ENCODE measurements at regions of chr1 and their contacts with region 1.

Region 1: DNA sequence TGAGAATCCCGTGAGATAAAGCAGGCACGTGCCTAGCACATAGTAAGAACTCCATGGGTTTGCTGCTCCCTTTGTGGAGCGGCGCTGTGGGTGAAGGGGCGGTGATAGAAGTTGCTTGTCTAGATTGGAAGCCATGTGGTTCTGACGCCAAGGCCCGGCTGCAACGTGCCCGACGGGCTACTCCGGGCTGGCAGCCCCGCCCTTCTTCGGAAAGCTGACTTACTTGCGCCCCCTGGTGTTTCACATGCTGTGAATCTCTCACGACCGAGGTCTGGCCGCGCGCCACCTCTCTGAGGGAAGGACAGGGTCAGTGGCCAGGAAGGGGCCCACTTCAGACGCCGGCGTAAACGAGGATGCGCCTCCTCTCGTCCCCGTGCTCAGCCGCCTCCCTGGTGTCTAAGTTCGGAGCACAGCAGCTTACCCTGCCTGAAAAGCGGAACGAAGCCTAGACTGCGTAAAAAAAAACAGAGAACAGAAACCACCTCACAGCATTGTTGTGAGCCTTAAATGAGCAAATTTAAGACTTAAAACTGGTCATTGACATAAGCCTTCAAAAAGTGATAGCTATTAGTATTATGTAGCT is 42.6 kb upstream of the WNT2B start:
- DNase-seq: peak; percentile 95
- H3K4me3 ChIP-seq: peak overlapping the region; percentile 26 to 27
- H3K27ac ChIP-seq: peak overlapping the region; percentile 70
- H3K4me1 ChIP-seq: peaks cover 6% of the 10 kb centered on the region
- H3K27me3 ChIP-seq: no peaks in the 10 kb centered on the region
- CTCF ChIP-seq: peak; percentile 82 to 97 (median 96)
- POLR2A ChIP-seq: no peak

Region 2: DNA sequence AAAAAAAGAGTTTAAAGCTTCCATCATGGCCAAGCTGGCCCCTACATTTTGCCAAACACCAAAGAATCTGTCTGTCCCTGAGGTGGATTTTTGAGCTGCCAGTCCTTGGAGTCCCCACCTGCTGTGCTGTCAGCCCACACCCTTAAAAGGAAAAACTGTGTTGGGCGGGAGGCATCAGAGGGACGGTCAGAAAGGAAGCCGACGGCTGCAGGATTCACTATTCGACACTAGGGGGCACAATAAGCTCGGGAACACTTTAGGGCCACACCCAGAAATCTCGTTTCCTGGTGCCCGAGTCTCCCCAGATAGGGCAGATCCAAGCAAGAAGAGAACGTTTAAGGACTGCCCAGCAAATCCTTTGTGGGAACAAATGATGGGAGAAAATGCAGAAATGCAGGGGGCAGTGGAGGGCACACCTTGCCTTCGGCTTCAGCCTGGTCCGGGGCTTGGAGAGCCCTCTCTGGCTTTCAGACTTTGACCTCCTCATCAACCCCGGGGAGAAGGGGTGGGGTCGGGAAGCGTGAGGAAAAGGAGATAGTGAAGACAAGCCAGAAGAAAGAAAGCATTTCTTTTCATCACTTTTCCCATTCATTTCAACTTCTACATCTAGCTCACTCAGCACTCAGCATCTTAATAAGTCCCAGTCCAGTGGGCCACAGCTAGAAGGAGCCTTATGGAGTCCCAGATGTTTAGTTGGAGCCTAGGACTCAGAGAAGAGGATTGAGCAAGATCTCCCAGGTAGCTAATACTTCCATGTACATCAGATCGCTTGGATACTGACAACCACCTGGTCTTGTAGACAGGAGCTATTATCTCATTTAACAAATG is 75.2 kb before region 1 on chr1:
- intact Hi-C with region 1: loop called (anchors 1 kb)
- DNase-seq: peak; percentile 89
- H3K4me3 ChIP-seq: peak overlapping the region; percentile 14 to 18
- H3K27ac ChIP-seq: peak overlapping the region; percentile 26 to 52
- H3K4me1 ChIP-seq: peaks cover 8% of the 10 kb centered on the region
- H3K27me3 ChIP-seq: no peaks in the 10 kb centered on the region
- CTCF ChIP-seq: peak; percentile 86 to 97 (median 96)
- POLR2A ChIP-seq: no peak

Region 3: GRCh38 chr1:112395821-112396652 is 70.1 kb before region 1 on chr1 and contains the start of gene CTTNBP2NL:
- intact Hi-C with region 1: loop called (anchors 2 kb)
- DNase-seq: peak; percentile 98
- H3K4me3 ChIP-seq: peak within 1 kb of the TSS; percentile 65 to 76
- H3K27ac ChIP-seq: peak within 1 kb of the TSS; percentile 85 to 87
- H3K4me1 ChIP-seq: peaks cover 8% of the 10 kb centered on the region
- H3K27me3 ChIP-seq: no peaks in the 10 kb centered on the region
- CTCF ChIP-seq: peak in 2 of 4 experiments; percentile 2 to 18
- POLR2A ChIP-seq: peak; percentile 75
- total RNA-seq, gene CTTNBP2NL: 10.6 to 15.2 TPM

Region 4: DNA sequence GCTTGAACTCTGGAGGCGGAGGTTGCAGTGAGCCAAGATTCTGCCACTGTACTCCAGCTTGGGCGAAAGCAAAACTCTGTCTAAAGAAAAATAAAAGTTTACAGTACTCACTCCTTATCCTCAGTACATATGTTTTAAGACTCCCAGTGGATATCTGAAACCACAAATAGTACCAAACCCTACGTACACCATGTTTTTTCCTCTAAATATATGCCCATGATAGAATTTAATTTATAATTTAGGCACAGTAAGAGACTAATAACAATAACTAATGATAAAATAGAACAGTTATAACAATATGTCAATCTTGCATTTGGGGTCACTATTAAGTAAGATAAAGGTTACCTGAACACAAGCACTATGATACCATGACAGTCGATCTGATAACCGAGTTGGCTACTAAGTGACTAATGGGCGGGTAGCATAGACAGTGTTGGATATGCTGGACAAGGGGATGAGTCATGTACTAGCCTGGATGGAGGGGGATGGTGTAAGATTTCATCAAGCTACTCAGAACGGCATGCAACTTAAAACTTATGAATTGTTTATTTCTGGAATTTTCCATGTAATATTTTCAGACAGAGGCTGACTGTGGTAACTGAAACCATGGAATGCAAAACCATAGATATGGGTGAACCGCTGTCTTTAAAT is 109.1 kb after region 1 on chr1:
- intact Hi-C with region 1: no loop called
- DNase-seq: no peak
- H3K4me3 ChIP-seq: no peak overlapping the region
- H3K27ac ChIP-seq: no peak overlapping the region
- H3K4me1 ChIP-seq: no peaks in the 10 kb centered on the region
- H3K27me3 ChIP-seq: no peaks in the 10 kb centered on the region
- CTCF ChIP-seq: no peak
- POLR2A ChIP-seq: no peak